ENCODE measurements at regions of chr17 and their contacts with region 1.

Region 1: DNA sequence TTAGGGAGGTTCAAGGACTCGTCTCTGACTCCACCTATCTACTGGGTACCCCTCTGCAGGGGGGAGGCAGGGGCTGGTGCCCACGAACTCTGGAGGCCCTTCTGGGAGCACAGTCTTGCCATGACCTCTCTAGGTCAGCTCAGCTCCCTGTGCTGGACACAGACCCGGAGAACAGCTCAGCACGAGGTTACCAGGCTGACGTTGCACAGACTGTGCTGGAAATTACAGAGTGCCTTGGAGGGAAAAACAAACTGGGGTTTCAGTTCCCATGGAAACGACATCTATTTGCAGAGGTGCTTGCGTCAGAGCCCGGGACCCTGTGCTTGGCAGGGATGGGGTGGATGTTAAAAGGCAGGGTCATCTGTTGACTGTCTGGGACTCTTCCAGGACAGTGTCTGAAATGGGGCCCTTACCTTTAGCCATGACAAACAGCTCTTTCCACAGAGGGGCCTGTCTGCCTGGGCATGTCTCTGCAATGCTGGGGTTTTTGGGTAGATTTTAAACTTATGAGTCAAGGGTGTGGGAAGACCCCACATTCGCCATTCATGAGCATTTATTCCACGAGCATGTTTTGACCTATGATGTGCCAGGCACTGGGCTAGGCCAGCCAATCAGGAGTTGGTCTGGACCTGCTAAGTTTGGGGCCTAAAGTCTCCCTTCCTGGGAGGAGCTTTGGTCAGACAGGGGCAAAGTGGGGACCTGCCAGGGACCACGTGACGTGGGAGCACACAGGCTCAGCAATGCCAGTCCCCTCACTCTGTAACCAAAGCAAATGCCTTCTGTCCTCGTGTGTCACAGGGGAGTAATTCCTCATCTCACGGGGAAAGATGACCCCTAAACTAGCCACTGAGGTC is 22.5 kb downstream of the CCR7 start:
- DNase-seq: no peak
- H3K4me3 Mint-ChIP-seq: peak overlapping the region; percentile 65
- H3K27ac Mint-ChIP-seq: peak overlapping the region; percentile 94
- H3K4me1 Mint-ChIP-seq: peaks cover 68% of the 10 kb centered on the region
- H3K27me3 Mint-ChIP-seq: no peaks in the 10 kb centered on the region

Region 2: GRCh38 chr17:40317880-40318829 is 224.6 kb before region 1 on chr17:
- intact Hi-C with region 1: loop called (anchors 5 kb)
- DNase-seq: peak; percentile 87
- H3K4me3 Mint-ChIP-seq: peak overlapping the region; percentile 92
- H3K27ac Mint-ChIP-seq: peak overlapping the region; percentile 81
- H3K4me1 Mint-ChIP-seq: peaks cover 58% of the 10 kb centered on the region
- H3K27me3 Mint-ChIP-seq: no peaks in the 10 kb centered on the region

Region 3: DNA sequence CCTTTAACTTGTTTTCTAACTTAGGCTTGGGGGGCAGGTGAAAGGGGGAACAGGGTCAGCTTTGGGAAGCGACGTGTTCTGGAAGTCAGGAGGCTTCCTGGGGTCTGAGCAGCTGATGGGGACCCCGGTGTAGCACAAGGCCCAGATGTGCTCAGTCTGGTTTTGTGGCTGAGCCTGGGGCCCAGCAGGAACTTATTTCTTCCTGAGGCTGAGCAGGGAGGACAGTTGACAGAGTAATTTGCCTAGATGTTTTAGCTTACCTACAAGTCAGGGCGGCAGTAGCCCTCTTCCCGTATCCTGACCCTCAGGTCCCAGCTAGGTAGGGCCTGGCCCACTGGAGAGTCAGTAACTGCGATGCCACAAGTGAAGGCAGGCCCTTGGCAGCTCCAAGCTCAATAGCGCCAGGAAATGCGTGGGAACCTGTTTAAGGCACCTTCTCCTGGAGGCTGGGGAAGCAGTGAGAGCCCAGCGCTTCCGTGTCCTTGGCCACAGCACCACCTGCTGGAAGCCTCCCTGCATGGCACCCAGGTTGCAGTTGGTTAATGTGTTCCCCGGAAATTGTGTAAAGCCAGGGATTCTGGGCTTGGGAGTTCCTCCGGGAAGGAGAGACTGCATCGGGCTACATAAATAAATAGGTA is 17.3 kb after region 1 on chr17:
- intact Hi-C with region 1: loop called (anchors 1 kb)
- DNase-seq: peak; percentile 77
- H3K4me3 Mint-ChIP-seq: peak overlapping the region; percentile 95
- H3K27ac Mint-ChIP-seq: peak overlapping the region; percentile 99
- H3K4me1 Mint-ChIP-seq: peaks cover 61% of the 10 kb centered on the region
- H3K27me3 Mint-ChIP-seq: no peaks in the 10 kb centered on the region

Region 4: GRCh38 chr17:40598663-40599467 is 56.1 kb after region 1 on chr17:
- intact Hi-C with region 1: loop called (anchors 2 kb)
- DNase-seq: no peak
- H3K4me3 Mint-ChIP-seq: peak overlapping the region; percentile 54
- H3K27ac Mint-ChIP-seq: peak overlapping the region; percentile 89
- H3K4me1 Mint-ChIP-seq: peaks cover 83% of the 10 kb centered on the region
- H3K27me3 Mint-ChIP-seq: no peaks in the 10 kb centered on the region

Region 5: DNA sequence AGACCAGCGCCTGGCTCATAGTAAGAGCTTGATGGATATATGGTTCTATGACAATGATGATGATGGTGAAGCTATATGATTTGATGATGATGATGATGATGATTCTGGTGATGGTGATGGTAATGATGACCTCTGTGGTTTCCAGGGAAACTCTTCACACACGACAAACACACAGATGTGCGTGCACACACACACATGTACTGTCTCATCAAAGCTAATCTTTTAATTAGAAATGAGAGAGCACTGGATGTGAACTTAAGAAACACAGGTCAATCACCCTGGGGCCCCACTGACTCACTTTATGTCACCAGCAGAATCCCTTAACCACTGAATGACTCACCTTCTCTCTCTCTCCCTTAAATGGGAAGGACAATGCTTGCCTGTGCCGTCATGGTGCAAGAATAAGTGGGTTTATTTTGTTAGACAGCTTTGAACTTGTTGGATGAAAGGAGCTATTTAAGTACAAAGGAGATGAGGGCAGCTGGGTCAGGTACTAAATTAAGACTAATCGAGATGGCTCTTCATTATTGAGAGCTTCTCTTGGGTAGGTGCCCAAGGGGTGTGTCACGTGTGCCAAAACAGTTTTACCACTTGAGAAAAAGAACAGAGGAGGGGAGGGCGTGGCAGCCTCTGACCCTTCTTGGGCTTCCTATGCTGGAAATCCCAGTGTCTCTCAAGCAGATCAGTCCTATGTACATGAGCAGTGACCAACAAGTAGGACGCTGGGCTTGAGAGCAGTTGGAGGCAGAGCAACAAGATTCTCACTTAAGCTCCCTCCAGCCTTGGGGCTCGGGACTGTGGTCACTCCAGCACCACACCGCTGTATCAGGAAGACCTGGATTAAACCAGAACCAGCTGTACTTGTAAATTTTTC is 861.2 kb after region 1 on chr17:
- intact Hi-C with region 1: loop called (anchors 10 kb)
- DNase-seq: no peak
- H3K4me3 Mint-ChIP-seq: no peak overlapping the region
- H3K27ac Mint-ChIP-seq: peak overlapping the region; percentile 82
- H3K4me1 Mint-ChIP-seq: peaks cover 24% of the 10 kb centered on the region
- H3K27me3 Mint-ChIP-seq: no peaks in the 10 kb centered on the region